CD14-positive monocyte (primary cell): ENCODE measurements at regions of chr6 and their contacts with region 1.

Region 1: DNA sequence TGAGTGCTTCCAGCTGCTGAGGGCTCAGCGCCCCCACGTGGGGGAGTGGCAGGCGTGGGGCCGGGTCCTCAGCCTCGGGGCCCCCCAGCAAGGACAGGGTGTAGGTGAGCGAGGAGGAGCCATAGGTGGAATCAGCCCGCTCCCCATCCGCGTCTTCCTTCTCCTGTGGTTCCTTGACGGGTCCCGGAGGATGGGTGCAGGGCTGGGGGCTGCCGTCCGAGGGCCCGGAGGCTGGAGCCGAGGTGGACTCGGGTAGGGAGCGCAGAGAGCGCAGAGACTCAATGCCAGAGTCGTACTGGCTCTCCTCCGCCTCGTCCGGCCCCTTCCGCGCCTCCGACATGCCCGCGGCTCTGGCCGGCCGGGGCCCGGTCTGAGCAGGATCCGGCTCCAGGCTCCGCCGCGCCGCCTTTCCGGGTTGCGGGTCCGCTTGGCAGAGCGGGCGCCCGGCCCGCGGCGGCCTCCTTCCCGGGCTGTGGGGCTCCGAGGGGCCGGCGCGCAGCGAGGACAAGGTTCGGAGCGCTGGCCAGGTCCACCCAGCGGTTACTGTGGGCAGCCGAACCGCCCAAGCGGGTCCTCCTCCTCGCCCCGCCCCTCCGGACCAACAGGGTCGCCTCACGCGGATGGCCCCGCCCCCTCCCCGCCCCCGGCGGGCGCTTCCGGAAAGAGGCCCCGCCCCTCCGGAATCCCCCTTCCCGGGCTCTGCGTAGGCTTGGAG is at the start of gene NFKBIE:
- DNase-seq: peak; percentile 94 to 96 (median 96)
- H3K4me3 ChIP-seq: peak within 1 kb of the TSS; percentile 75 to 99 (median 90)
- H3K4me3 Mint-ChIP-seq: peak within 1 kb of the TSS; percentile 99
- H3K27ac ChIP-seq: peak within 1 kb of the TSS; percentile 96 to 99
- H3K27ac Mint-ChIP-seq: peak within 1 kb of the TSS; percentile 98 to 100 (median 99)
- H3K4me1 ChIP-seq: peaks cover 46 to 61% of the 10 kb centered on the region in 2 donors
- H3K4me1 Mint-ChIP-seq: peaks cover 59% of the 10 kb centered on the region
- H3K27me3 ChIP-seq: peaks cover 15 to 23% of the 10 kb centered on the region in 2 donors
- H3K27me3 Mint-ChIP-seq: peaks cover 20 to 27% (median 24%) of the 10 kb centered on the region in 3 donors
- CTCF ChIP-seq: peak; percentile 26
- polyA plus RNA-seq, gene NFKBIE: 19.9 to 108 (median 23.2) TPM

Region 2: GRCh38 chr6:43798688-43799444 is 466.3 kb before region 1 on chr6:
- intact Hi-C with region 1: loop called in 1 of 2 experiments (anchors 10 kb)
- DNase-seq: peak; percentile 93 to 95 (median 93)
- H3K4me3 ChIP-seq: peak overlapping the region in 1 of 3 experiments; percentile 21
- H3K4me3 Mint-ChIP-seq: peak overlapping the region; percentile 48 to 73
- H3K27ac ChIP-seq: peak overlapping the region; percentile 84 to 85
- H3K27ac Mint-ChIP-seq: peak overlapping the region; percentile 87 to 97 (median 88)
- H3K4me1 ChIP-seq: peaks cover 89 to 90% of the 10 kb centered on the region in 2 donors
- H3K4me1 Mint-ChIP-seq: peaks cover 91% of the 10 kb centered on the region
- H3K27me3 ChIP-seq: no peaks in the 10 kb centered on the region
- H3K27me3 Mint-ChIP-seq: peaks cover 0 to 7% (median 0%) of the 10 kb centered on the region in 3 donors
- CTCF ChIP-seq: no peak

Region 3: DNA sequence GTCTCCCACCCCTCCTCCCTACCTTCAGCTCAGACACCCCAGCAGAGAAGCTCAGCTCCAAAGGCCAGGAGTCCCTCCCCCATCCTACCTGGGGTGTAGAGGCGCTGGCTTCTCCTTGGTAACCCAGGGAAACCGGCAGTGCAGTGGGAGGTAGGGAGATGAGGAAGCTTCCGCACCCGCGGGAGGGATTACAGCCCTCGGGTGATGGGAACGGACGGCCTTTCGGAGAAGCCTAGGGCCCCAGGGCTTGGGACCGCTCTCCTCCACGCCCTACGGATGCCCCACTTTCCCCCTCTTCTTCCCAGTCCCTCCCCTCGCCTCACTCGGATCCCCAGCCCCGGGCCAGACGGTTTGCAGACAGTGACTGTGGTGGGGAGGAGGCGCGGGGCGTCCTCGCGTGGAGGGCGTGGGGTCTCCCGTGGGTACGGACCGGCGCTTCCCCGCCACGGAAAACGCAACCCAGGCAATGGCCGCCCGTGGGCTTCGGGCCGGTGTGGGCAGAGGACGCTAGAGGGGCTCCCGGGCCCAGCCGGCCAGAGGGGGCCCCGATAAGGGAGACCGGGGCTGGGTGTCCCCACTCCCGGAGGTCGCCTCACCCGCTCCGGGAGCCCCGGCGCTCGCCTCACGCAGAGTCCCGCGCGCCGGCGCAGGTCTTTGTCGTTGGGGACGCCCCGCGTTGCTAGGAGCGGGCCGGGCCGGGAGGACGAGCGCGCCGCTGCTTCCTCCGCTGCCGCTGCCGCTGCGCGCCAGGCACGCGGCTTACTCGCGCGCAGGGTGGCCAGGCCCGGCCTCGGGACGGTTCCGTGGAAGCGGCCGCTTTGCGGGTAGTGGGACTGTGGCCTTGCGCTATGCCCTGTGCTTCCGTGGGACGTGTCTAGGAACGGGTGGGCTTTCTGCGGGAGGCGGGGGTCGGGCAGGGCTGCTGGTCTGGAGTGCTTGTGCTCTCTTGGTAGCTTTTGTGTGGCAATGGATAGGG is 32.2 kb after region 1 on chr6:
- intact Hi-C with region 1: no loop called
- DNase-seq: peak in 1 of 3 donors; percentile 5
- H3K4me3 ChIP-seq: peak overlapping the region in 1 of 3 experiments; percentile 43
- H3K4me3 Mint-ChIP-seq: peak overlapping the region; percentile 31 to 82
- H3K27ac ChIP-seq: no peak overlapping the region
- H3K27ac Mint-ChIP-seq: no peak overlapping the region
- H3K4me1 ChIP-seq: peaks cover 9 to 15% of the 10 kb centered on the region in 2 donors
- H3K4me1 Mint-ChIP-seq: peaks cover 25% of the 10 kb centered on the region
- H3K27me3 ChIP-seq: peaks cover 23 to 43% of the 10 kb centered on the region in 2 donors
- H3K27me3 Mint-ChIP-seq: peaks cover 46 to 66% (median 54%) of the 10 kb centered on the region in 3 donors
- CTCF ChIP-seq: no peak

Region 4: GRCh38 chr6:44312901-44313788 is 48.0 kb after region 1 on chr6 and contains the start of gene AARS2:
- intact Hi-C with region 1: loop called (anchors 5 kb)
- DNase-seq: peak; percentile 84 to 86 (median 85)
- H3K4me3 ChIP-seq: peak within 1 kb of the TSS; percentile 50 to 86 (median 83)
- H3K4me3 Mint-ChIP-seq: peak within 1 kb of the TSS; percentile 93 to 97
- H3K27ac ChIP-seq: peak within 1 kb of the TSS in 1 of 2 donors; percentile 84
- H3K27ac Mint-ChIP-seq: peak within 1 kb of the TSS; percentile 87 to 95 (median 88)
- H3K4me1 ChIP-seq: peaks cover 12 to 15% of the 10 kb centered on the region in 2 donors
- H3K4me1 Mint-ChIP-seq: peaks cover 25% of the 10 kb centered on the region
- H3K27me3 ChIP-seq: peaks cover 0 to 2% of the 10 kb centered on the region in 2 donors
- H3K27me3 Mint-ChIP-seq: peaks cover 0 to 9% (median 3%) of the 10 kb centered on the region in 3 donors
- CTCF ChIP-seq: peak; percentile 99
- polyA plus RNA-seq, gene AARS2: 1.8 to 4.5 (median 3.2) TPM

Region 5: DNA sequence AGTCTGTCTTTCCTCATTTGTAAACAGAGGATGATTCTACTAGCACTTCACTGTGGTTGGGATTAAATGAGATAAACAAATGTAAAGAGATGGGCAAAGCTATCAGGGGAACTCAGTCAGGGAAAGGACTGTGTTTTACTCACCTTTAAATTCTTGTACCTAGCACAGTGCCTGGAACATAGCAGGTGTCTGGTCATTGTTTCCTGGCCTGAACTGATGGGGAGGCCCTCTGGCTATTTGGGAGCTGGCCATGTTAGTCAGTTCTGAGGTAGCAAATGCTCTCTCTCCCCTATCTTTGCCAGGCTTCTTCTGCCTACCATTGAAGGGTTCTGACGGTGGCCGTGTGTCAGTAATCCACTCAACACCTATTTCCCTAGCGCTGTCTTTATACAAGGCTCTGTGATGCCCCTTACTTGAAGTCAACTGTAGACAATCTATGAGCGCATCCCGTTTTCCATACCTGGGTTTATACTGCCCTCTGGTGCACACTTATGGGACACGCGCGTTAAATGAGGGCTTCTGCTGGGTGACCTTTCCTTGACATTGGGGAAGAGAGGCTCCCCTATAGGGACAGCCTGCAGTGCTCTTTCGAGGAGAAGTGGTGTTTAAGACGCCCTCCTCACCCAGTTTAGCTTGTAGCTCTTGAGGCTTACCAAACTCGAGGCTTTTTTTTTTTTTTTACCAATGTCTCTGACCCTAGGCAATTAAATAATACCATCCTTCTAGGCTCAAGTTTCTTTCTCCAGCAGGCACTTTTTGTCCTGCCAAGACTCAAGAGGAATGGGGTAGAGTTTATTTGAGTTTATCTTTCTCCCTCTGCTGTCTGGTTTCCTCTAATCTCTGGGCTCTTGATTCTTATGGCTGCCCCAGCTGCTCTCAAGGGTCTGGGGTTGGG is 73.3 kb after region 1 on chr6:
- intact Hi-C with region 1: loop called (anchors 2 kb)
- DNase-seq: peak; percentile 51 to 70 (median 70)
- H3K4me3 ChIP-seq: no peak overlapping the region
- H3K4me3 Mint-ChIP-seq: no peak overlapping the region
- H3K27ac ChIP-seq: no peak overlapping the region
- H3K27ac Mint-ChIP-seq: peak overlapping the region in 1 of 7 donors; percentile 25
- H3K4me1 ChIP-seq: peaks cover 25 to 28% of the 10 kb centered on the region in 2 donors
- H3K4me1 Mint-ChIP-seq: peaks cover 32% of the 10 kb centered on the region
- H3K27me3 ChIP-seq: peaks cover 0 to 3% of the 10 kb centered on the region in 2 donors
- H3K27me3 Mint-ChIP-seq: peaks cover 4 to 7% (median 6%) of the 10 kb centered on the region in 3 donors
- CTCF ChIP-seq: peak; percentile 84

Region 6: GRCh38 chr6:44387346-44388133 is 122.4 kb after region 1 on chr6 and contains the start of gene CDC5L:
- intact Hi-C with region 1: loop called in 1 of 2 experiments (anchors 5 kb)
- DNase-seq: peak; percentile 94 to 98 (median 96)
- H3K4me3 ChIP-seq: peak within 1 kb of the TSS; percentile 90 to 94 (median 91)
- H3K4me3 Mint-ChIP-seq: peak within 1 kb of the TSS; percentile 94
- H3K27ac ChIP-seq: peak within 1 kb of the TSS; percentile 97 to 98
- H3K27ac Mint-ChIP-seq: peak within 1 kb of the TSS; percentile 96 to 99 (median 99)
- H3K4me1 ChIP-seq: peaks cover 30 to 33% of the 10 kb centered on the region in 2 donors
- H3K4me1 Mint-ChIP-seq: peaks cover 34% of the 10 kb centered on the region
- H3K27me3 ChIP-seq: no peaks in the 10 kb centered on the region
- H3K27me3 Mint-ChIP-seq: no peaks in the 10 kb centered on the region
- CTCF ChIP-seq: no peak
- polyA plus RNA-seq, gene CDC5L: 4.9 to 10.2 (median 7.4) TPM